BJ (cell line): ENCODE measurements at regions of chr10 and their contacts with region 1.

Region 1: DNA sequence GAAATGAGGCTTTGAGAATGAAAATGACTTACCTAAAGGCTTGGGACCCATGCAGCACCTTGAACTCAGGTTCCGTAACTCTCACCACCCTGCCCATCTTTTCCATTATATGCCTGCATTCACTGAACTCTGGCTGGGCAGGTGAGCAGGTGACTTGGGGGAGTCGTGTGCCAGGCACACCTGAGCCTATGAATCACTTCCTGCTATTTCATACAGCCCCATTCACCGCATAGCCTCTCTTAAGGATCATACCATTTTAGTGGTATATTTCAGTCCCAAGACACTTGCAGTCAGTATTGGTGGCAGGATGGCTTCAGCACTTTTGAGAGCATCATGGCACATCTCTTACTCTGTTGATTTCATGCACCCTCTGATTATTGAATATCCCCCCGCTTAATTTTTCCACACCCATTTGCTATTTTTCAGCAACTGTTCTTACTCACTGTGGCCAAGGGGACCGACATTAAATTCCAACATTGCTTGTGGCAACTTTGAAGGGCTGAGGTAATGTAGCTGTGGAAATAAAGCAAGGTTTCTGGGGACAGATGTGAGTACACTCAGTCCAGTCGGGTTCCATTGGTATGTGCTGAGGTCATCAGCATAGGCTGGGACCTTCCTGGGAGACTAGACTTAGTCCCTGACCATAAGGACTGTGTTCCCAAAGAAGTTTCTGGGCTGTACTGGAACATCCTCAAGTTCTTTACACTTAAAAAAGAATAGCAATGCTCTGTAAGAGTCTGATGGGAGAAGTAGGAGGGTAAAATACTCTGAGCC is 39.8 kb upstream of the ZNF438 start:
- DNase-seq: no peak
- H3K4me3 ChIP-seq: no peak overlapping the region
- H3K27me3 ChIP-seq: no peaks in the 10 kb centered on the region
- CTCF ChIP-seq: no peak

Region 2: GRCh38 chr10:30911303-30911863 is 160.0 kb before region 1 on chr10:
- CTCF ChIA-PET with region 1: no interaction called
- POLR2A ChIA-PET with region 1: interaction called, 11 read pairs
- DNase-seq: no peak
- H3K4me3 ChIP-seq: no peak overlapping the region
- H3K27me3 ChIP-seq: no peaks in the 10 kb centered on the region
- CTCF ChIP-seq: no peak

Region 3: DNA sequence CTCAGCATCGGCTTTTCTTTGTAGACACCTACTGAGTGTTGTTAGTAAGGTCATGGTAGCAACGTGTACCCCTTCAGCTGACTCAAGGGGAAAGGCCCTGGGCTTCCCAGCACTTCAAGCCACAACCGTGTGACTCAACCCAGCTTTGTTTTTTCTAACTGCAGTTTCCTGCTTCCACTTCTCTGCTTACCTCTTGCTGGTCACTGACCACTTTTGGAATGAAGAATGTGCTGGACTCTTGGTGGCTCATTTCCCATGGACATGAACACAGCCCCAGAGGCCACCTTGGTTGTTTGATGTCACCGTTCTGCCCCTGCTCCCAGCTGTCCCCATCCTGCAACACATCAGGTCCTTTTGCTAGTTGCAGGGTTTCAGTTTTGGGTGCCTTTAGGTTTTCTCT is 29.7 kb after region 1 on chr10:
- CTCF ChIA-PET with region 1: no interaction called
- POLR2A ChIA-PET with region 1: no interaction called
- DNase-seq: no peak
- H3K4me3 ChIP-seq: no peak overlapping the region
- H3K27me3 ChIP-seq: no peaks in the 10 kb centered on the region
- CTCF ChIP-seq: no peak